Ovary (tissue), 10 donors: ENCODE measurements at regions of chr9 and their contacts with region 1.

Region 1: DNA sequence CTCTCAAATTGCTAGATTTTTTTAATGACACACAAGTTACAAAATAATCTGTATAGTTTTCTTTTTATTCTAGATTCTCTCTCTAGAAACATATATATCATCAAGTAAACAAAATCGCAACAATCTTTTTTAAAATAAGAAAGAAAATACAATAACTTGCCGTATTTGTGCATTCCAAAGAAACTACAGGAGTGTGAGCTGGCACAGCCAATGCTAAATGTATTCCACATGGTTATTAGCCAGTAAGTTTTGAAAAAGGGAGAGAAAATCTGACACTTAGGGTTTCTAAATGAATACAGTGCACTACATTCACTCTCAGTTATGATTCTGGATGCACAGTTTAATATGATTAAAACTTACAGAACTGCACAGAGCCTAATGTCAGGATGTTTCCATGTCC is 117.9 kb downstream of the BNC2 start:
- DNase-seq: no peak
- H3K4me3 ChIP-seq: no peak overlapping the region
- H3K27ac ChIP-seq: no peak overlapping the region
- H3K4me1 ChIP-seq: peaks cover 2% of the 10 kb centered on the region
- H3K27me3 ChIP-seq: no peaks in the 10 kb centered on the region
- CTCF ChIP-seq: no peak
- EP300 ChIP-seq: no peak
- POLR2A ChIP-seq: no peak

Region 2: GRCh38 chr9:16039988-16040761 is 712.4 kb before region 1 on chr9:
- intact Hi-C with region 1: loop called in 1 of 4 experiments (anchors 10 kb)
- DNase-seq: peak in 4 of 5 donors; percentile 14 to 40 (median 31)
- H3K4me3 ChIP-seq: no peak overlapping the region
- H3K27ac ChIP-seq: no peak overlapping the region
- H3K4me1 ChIP-seq: peaks cover 12% of the 10 kb centered on the region
- H3K27me3 ChIP-seq: no peaks in the 10 kb centered on the region
- CTCF ChIP-seq: no peak
- EP300 ChIP-seq: no peak
- POLR2A ChIP-seq: no peak

Region 3: GRCh38 chr9:16598316-16598715 is 154.3 kb before region 1 on chr9:
- intact Hi-C with region 1: no loop called
- DNase-seq: no peak
- H3K4me3 ChIP-seq: no peak overlapping the region
- H3K27ac ChIP-seq: peak overlapping the region in 1 of 2 donors; percentile 16
- H3K4me1 ChIP-seq: peaks cover 3% of the 10 kb centered on the region
- H3K27me3 ChIP-seq: no peaks in the 10 kb centered on the region
- CTCF ChIP-seq: no peak
- EP300 ChIP-seq: no peak
- POLR2A ChIP-seq: no peak